SK-N-SH (cell line): ENCODE measurements at regions of chr1 and their contacts with region 1.

Region 1: GRCh38 chr1:16217061-16217785 is 4.8 kb upstream of the ARHGEF19 start:
- DNase-seq: peak; percentile 99
- H3K4me3 ChIP-seq: peak overlapping the region; percentile 57 to 65
- H3K27ac ChIP-seq: peak overlapping the region; percentile 33 to 84; a peak in 3 of 4 replicates
- H3K4me1 ChIP-seq: peaks cover 0 to 22% of the 10 kb centered on the region in 2 experiments; a peak in 2 of 4 replicates
- H3K27me3 ChIP-seq: no peaks in the 10 kb centered on the region
- CTCF ChIP-seq: no peak
- EP300 ChIP-seq: no peak
- RAD21 ChIP-seq: no peak

Region 2: DNA sequence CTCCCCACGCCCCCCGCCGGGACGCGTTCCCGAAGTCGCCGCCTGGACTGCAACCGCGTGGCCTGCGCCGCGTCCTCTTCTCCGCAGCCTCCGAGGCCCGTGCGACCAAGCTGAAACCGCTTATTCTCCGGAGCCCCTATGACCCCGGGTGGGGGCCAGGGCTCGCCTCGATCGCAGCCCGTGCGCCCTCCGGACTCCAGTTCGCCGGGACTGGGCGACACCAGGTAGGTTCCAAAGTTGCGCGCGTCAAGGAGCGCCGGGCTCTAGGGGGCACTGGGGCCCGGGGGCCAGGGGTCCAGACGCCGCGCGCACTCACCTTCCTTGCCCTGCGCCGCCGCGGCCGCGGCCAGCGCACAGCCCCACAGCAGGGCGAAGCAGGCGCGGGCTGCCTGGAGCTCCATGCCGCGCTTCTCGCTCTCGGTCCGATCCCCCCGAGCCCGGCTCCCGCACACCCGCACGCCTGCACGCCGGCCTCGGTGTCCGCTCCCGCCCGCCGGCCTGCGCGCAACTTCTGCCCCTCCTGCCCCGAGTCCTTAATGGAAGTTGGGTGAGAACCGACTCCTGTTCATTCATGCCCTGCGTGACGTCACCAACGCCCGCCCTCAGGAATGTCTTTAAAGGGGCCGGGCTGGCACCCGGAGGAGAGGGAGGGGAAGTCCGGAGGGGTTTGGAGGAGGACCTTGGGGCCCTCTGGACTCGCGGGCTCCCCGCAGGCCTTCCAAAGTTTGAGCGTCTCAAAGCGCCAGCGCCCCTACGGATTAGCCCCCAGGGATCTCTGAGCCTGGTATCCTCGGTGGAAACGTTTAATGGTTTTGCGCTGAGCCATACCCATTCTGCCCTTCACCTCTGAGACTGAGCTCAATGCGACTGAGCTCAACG is 61.5 kb before region 1 on chr1 and contains the start of gene EPHA2:
- CTCF ChIA-PET with region 1: no interaction called
- POLR2A ChIA-PET with region 1: no interaction called
- DNase-seq: peak; percentile 86
- H3K4me3 ChIP-seq: peak within 1 kb of the TSS; percentile 57 to 91
- H3K27ac ChIP-seq: peak within 1 kb of the TSS; percentile 41 to 75; a peak in 3 of 4 replicates
- H3K4me1 ChIP-seq: peaks cover 26 to 32% of the 10 kb centered on the region in 2 experiments; a peak in 3 of 4 replicates
- H3K27me3 ChIP-seq: no peaks in the 10 kb centered on the region
- CTCF ChIP-seq: peak; percentile 10; the same call in 1 of the 2 replicates
- EP300 ChIP-seq: no peak
- RAD21 ChIP-seq: no peak
- polyA plus RNA-seq, gene EPHA2: 82.2 and 126 TPM in 2 replicates

Region 3: DNA sequence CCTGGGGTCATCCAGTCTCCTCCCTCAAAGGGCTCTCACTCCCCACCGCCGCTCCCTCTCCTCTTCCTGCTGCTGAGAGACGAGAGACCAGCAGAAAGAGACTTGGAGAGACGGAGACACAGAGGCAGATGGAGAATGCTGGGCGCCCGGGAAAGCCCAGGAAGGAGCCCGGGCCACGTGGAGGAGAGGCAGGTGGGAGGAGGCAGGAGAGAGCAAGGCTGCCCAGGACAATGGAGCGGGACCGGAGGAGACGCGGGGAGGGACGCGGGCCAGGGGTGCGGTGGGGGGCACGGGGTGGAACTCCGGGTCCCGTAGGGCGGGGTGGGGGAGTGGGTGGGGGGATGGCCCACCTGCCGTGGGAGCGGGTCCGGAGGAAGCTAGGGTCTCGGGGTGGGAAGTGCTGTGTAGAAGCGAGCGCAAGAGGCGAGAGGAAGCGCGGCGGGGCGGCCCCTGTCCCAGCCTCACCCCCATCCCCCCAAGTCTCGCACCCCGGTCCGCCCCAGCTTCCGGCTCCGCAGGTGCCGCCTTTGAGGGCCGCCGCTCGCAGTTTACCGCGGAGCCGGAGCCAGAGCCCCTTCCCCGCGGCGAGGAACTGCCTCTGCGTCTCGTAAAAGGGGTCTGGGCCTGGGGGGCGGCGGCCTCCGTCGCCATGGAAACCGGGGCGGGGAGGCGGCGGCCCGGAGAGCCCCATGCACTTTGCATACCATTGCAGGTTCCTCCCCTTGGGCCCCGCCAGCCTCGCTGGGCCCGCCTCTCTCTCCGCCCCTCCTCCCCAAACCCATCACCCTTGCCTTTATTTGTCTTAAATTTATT is 49.7 kb before region 1 on chr1:
- CTCF ChIA-PET with region 1: no interaction called
- POLR2A ChIA-PET with region 1: no interaction called
- DNase-seq: peak; percentile 92
- H3K4me3 ChIP-seq: peak overlapping the region in 1 of 2 experiments; percentile 49; a peak in 2 of 4 replicates
- H3K27ac ChIP-seq: peak overlapping the region in 1 of 2 experiments; percentile 12; a peak in 1 of 4 replicates
- H3K4me1 ChIP-seq: peaks cover 0 to 8% of the 10 kb centered on the region in 2 experiments; a peak in 2 of 4 replicates
- H3K27me3 ChIP-seq: no peaks in the 10 kb centered on the region
- CTCF ChIP-seq: no peak
- EP300 ChIP-seq: no peak
- RAD21 ChIP-seq: no peak

Region 4: GRCh38 chr1:16206547-16207317 is 10.5 kb before region 1 on chr1:
- CTCF ChIA-PET with region 1: interaction called, 3 read pairs
- POLR2A ChIA-PET with region 1: interaction called, 12 read pairs
- DNase-seq: peak; percentile 97
- H3K4me3 ChIP-seq: peak overlapping the region; percentile 53 to 63
- H3K27ac ChIP-seq: peak overlapping the region; percentile 84 to 90
- H3K4me1 ChIP-seq: peaks cover 0 to 22% of the 10 kb centered on the region in 2 experiments; a peak in 1 of 4 replicates
- H3K27me3 ChIP-seq: no peaks in the 10 kb centered on the region
- CTCF ChIP-seq: no peak
- EP300 ChIP-seq: 0 out of 4 replicates have a peak, but pooled peaks of 1 of the 2 experiments have one; percentile 2
- RAD21 ChIP-seq: no peak

Region 5: GRCh38 chr1:16236511-16237342 is 19.5 kb after region 1 on chr1 and contains the start of gene CPLANE2:
- CTCF ChIA-PET with region 1: interaction called, 11 read pairs
- POLR2A ChIA-PET with region 1: interaction called, 7 read pairs
- DNase-seq: peak; percentile 97
- H3K4me3 ChIP-seq: peak within 1 kb of the TSS; percentile 69 to 92
- H3K27ac ChIP-seq: peak within 1 kb of the TSS; percentile 87 to 92
- H3K4me1 ChIP-seq: peaks cover 6 to 22% of the 10 kb centered on the region in 2 experiments
- H3K27me3 ChIP-seq: no peaks in the 10 kb centered on the region
- CTCF ChIP-seq: no peak
- EP300 ChIP-seq: no peak
- RAD21 ChIP-seq: peak; percentile 26; the same call in 1 of the 2 replicates
- polyA plus RNA-seq, gene CPLANE2: 6.5 and 8.6 TPM in 2 replicates